ENCODE measurements at regions of chrX and their contacts with region 1.

Region 1: DNA sequence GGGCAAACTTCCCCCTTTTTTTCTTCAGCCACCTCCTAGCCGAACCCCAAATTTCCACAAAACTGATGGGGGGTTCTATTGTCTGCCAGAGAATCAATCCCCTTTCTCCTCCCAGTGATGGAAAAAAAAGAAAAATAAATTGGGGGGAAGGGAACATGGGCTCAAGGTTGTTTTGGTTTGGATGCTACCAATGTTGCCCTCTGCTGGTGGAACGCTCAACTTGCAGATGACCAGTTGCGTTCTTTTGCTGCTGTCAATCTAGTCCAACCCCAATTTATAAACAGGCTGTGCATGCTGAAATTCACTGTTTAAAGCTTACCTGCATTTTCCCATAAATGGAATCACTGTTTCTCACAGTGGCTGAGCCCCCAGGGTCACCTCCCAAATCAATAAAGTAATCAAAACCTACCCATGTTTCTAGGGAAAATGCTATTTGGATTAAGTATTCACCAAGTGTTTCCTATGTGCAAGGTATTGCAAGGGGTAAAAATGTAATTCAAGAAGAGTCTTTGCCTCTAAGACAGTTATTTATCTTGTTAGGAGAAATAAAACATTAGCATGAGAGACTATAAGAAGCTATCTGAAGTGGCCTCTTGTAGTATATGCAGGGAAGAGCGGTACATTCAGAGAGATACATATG is 116.7 kb upstream of the TMEM164 start:
- H3K4me3 Mint-ChIP-seq: no peak overlapping the region
- H3K27ac Mint-ChIP-seq: peak overlapping the region; percentile 78
- H3K4me1 Mint-ChIP-seq: peaks cover 48% of the 10 kb centered on the region
- H3K27me3 Mint-ChIP-seq: no peaks in the 10 kb centered on the region

Region 2: GRCh38 chrX:109485470-109486340 is 400.5 kb before region 1 on chrX:
- intact Hi-C with region 1: loop called (anchors 5 kb)
- H3K4me3 Mint-ChIP-seq: no peak overlapping the region
- H3K27ac Mint-ChIP-seq: no peak overlapping the region
- H3K4me1 Mint-ChIP-seq: no peaks in the 10 kb centered on the region
- H3K27me3 Mint-ChIP-seq: no peaks in the 10 kb centered on the region

Region 3: GRCh38 chrX:109709129-109709631 is 177.1 kb before region 1 on chrX:
- intact Hi-C with region 1: loop called (anchors 2 kb)
- H3K4me3 Mint-ChIP-seq: no peak overlapping the region
- H3K27ac Mint-ChIP-seq: no peak overlapping the region
- H3K4me1 Mint-ChIP-seq: peaks cover 37% of the 10 kb centered on the region
- H3K27me3 Mint-ChIP-seq: no peaks in the 10 kb centered on the region

Region 4: GRCh38 chrX:109830704-109831206 is 55.5 kb before region 1 on chrX:
- intact Hi-C with region 1: no loop called
- H3K4me3 Mint-ChIP-seq: no peak overlapping the region
- H3K27ac Mint-ChIP-seq: peak overlapping the region; percentile 52
- H3K4me1 Mint-ChIP-seq: peaks cover 7% of the 10 kb centered on the region
- H3K27me3 Mint-ChIP-seq: no peaks in the 10 kb centered on the region

Region 5: GRCh38 chrX:109856974-109857373 is 29.3 kb before region 1 on chrX:
- intact Hi-C with region 1: loop called (anchors 2 kb)
- H3K4me3 Mint-ChIP-seq: no peak overlapping the region
- H3K27ac Mint-ChIP-seq: no peak overlapping the region
- H3K4me1 Mint-ChIP-seq: peaks cover 15% of the 10 kb centered on the region
- H3K27me3 Mint-ChIP-seq: no peaks in the 10 kb centered on the region

Measured in dendritic cell treated with granulocyte-macrophage colony-stimulating factor and Interleukin-4, amounts not matched to agents 40 ng/mL and 50 ng/mL, for 4 days (primary cell).